Heart left ventricle (tissue), 16 donors: ENCODE measurements at regions of chr6 and their contacts with region 1.

Region 1: GRCh38 chr6:97026298-97026697 is 101.8 kb downstream of the KLHL32 start:
- DNase-seq: no peak
- ATAC-seq: peak in 2 of 4 donors; percentile 39 to 60
- H3K4me3 ChIP-seq: no peak overlapping the region
- H3K27ac ChIP-seq: no peak overlapping the region
- H3K4me1 ChIP-seq: peaks cover 0 to 6% (median 0%) of the 10 kb centered on the region in 12 donors
- H3K27me3 ChIP-seq: no peaks in the 10 kb centered on the region
- CTCF ChIP-seq: no peak
- POLR2A ChIP-seq: no peak

Region 2: GRCh38 chr6:96923871-96924493 is 102.3 kb before region 1 on chr6:
- intact Hi-C with region 1: loop called in 1 of 10 experiments (anchors 5 kb)
- DNase-seq: no peak
- ATAC-seq: peak; percentile 63 to 87 (median 79)
- H3K4me3 ChIP-seq: peak overlapping the region; percentile 49 to 75 (median 63)
- H3K27ac ChIP-seq: peak overlapping the region in 11 of 12 donors; percentile 28 to 87 (median 76)
- H3K4me1 ChIP-seq: peaks cover 0 to 15% (median 1%) of the 10 kb centered on the region in 12 donors
- H3K27me3 ChIP-seq: peaks cover 0 to 3% (median 0%) of the 10 kb centered on the region in 9 donors
- CTCF ChIP-seq: no peak
- POLR2A ChIP-seq: no peak